ENCODE measurements at regions of chr2 and their contacts with region 1.

Region 1: GRCh38 chr2:17646081-17646554 is 105.6 kb downstream of the VSNL1 start:
- DNase-seq: peak; percentile 40
- ATAC-seq: peak; percentile 54
- H3K4me3 Mint-ChIP-seq: no peak overlapping the region
- H3K27ac Mint-ChIP-seq: no peak overlapping the region
- H3K4me1 Mint-ChIP-seq: peaks cover 42% of the 10 kb centered on the region
- H3K27me3 Mint-ChIP-seq: no peaks in the 10 kb centered on the region
- CTCF ChIP-seq: peak; percentile 79

Region 2: DNA sequence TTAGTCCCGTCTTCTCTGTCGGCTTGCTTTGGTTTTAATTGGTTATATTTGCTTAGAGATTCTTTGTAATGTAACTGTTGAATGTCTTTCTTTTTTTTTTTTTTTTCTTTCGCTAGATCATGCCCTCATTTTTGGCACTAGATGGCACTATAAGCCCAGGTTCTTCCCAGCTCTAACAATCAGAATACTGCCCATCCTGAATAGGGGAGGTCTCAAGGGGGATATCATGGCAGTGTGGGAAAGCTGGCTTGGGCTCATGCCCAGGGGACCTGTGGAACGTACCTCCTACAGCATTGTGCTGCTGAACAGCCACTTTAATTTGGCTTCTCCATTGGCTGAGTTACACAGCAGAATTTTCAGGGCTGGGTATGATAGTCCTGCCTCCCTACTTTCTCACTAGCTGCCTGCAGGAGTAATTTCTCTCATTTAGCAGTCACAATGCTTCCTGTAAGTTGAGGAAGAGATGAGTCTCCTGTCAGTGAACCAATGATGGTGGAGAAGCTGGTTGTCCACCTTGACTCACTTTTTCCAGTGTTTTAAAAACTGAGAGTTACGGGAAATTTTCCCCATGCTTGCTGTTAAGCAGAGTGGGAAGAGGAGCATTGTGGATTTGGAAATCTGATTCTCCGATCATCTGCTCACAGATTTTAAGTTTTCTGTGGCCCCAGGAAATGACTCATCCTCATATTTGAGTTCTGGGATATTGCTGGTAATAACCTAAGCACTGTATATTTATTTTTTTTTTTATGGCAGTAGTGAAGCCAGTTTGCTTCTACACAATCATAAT is 175.1 kb before region 1 on chr2:
- CTCF ChIA-PET with region 1: interaction called, 35 read pairs
- POLR2A ChIA-PET with region 1: no interaction called
- DNase-seq: peak; percentile 34
- ATAC-seq: peak; percentile 100
- H3K4me3 Mint-ChIP-seq: no peak overlapping the region
- H3K27ac Mint-ChIP-seq: no peak overlapping the region
- H3K4me1 Mint-ChIP-seq: peaks cover 20% of the 10 kb centered on the region
- H3K27me3 Mint-ChIP-seq: peaks cover 6% of the 10 kb centered on the region
- CTCF ChIP-seq: 0 out of 2 replicates have a peak, but pooled peaks have one; percentile 49

Region 3: GRCh38 chr2:17658251-17658843 is 12.2 kb after region 1 on chr2:
- CTCF ChIA-PET with region 1: interaction called, 31 read pairs
- POLR2A ChIA-PET with region 1: no interaction called
- DNase-seq: no peak
- ATAC-seq: no peak
- H3K4me3 Mint-ChIP-seq: no peak overlapping the region
- H3K27ac Mint-ChIP-seq: no peak overlapping the region
- H3K4me1 Mint-ChIP-seq: peaks cover 8% of the 10 kb centered on the region; the same call in 1 of the 2 replicates
- H3K27me3 Mint-ChIP-seq: no peaks in the 10 kb centered on the region
- CTCF ChIP-seq: no peak